Activated CD4-positive, alpha-beta T cell treated with anti-CD3 and anti-CD28 coated beads for 36 hours (primary cell): ENCODE measurements at regions of chr9 and their contacts with region 1.

Region 1: DNA sequence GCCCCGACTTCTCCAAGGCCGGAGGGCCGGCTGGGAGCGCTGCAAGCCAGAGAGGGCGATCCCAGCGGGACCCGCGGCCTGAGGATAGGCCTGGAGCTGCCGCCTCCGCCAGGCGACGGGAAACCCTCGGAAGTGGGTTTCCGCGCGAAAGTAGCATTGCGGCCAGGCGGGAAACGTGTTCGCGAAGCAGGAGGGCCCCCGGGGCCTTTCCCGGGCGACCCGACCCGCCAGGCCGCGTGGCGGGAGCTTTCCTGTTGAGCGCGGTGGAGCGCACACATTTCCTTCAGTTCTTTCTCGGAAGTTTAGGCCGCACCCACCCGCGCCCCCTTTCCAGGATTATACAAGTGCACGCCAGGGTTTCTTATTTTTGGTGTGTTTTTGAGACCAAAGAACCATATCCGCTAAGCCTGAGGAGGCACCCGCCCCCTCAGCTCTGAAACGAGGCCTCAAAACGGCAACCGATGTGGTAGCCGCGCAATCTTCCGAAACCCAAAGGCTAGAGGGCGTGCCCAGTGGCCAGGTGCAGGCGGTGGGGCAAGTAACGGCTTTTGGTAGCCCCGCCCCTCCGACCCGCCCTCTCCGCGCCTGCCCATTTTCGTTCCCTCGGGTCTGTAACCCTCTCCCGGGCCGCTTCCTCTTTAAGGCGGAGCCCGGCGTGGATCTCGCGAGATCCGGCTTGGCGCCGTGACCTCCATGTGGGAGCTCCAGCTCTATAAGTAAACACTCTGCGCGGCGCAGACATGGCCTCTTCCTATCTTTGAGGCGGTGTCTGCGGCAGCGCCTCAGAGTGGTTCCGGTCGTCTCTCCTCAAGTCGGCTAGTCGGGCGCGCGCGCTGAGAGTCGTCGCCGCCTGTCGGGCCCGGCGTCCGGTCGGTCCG is at the start of gene UHRF2:
- DNase-seq: peak; percentile 100
- ATAC-seq: peak; percentile 91
- H3K4me3 Mint-ChIP-seq: peak within 1 kb of the TSS; percentile 83
- H3K27ac Mint-ChIP-seq: peak within 1 kb of the TSS; percentile 93
- H3K4me1 Mint-ChIP-seq: peaks cover 32% of the 10 kb centered on the region
- H3K27me3 Mint-ChIP-seq: peaks cover 6% of the 10 kb centered on the region
- total RNA-seq, gene UHRF2: 63.7 to 70.9 TPM

Region 2: DNA sequence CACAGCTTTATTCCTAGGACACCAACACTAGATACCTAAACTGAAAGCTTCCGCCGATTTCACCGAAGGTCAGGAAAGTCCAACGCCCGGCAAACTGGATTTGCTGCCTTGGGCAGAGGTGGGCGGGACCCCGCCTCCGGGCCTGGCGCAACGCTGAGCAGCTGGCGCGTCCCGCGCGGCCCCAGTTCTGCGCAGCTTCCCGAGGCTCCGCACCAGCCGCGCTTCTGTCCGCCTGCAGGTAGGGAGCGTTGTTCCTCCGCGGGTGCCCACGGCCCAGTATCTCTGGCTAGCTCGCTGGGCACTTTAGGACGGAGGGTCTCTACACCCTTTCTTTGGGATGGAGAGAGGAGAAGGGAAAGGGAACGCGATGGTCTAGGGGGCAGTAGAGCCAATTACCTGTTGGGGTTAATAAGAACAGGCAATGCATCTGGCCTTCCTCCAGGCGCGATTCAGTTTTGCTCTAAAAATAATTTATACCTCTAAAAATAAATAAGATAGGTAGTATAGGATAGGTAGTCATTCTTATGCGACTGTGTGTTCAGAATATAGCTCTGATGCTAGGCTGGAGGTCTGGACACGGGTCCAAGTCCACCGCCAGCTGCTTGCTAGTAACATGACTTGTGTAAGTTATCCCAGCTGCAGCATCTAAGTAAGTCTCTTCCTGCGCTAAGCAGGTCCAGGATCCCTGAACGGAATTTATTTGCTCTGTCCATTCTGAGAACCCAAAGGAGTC is 962.2 kb before region 1 on chr9 and contains the start of gene CD274:
- CTCF ChIA-PET with region 1: no interaction called
- POLR2A ChIA-PET with region 1: no interaction called
- intact Hi-C with region 1: loop called in 1 of 2 experiments (anchors 5 kb)
- DNase-seq: peak; percentile 94
- ATAC-seq: peak; percentile 66
- H3K4me3 Mint-ChIP-seq: peak within 1 kb of the TSS; percentile 98
- H3K27ac Mint-ChIP-seq: peak within 1 kb of the TSS; percentile 90
- H3K4me1 Mint-ChIP-seq: peaks cover 77% of the 10 kb centered on the region
- H3K27me3 Mint-ChIP-seq: no peaks in the 10 kb centered on the region
- total RNA-seq, gene CD274: 25.0 to 30.1 TPM

Region 3: GRCh38 chr9:6015278-6016157 is 397.2 kb before region 1 on chr9 and contains the start of gene RANBP6:
- CTCF ChIA-PET with region 1: no interaction called
- POLR2A ChIA-PET with region 1: no interaction called
- intact Hi-C with region 1: loop called in 1 of 2 experiments (anchors 2 kb)
- DNase-seq: peak; percentile 97
- ATAC-seq: peak; percentile 94
- H3K4me3 Mint-ChIP-seq: peak within 1 kb of the TSS; percentile 95
- H3K27ac Mint-ChIP-seq: peak within 1 kb of the TSS; percentile 99
- H3K4me1 Mint-ChIP-seq: peaks cover 28% of the 10 kb centered on the region
- H3K27me3 Mint-ChIP-seq: no peaks in the 10 kb centered on the region
- total RNA-seq, gene RANBP6: 11.7 to 18.2 TPM

Region 4: GRCh38 chr9:6126374-6126773 is 286.4 kb before region 1 on chr9:
- CTCF ChIA-PET with region 1: no interaction called
- POLR2A ChIA-PET with region 1: no interaction called
- intact Hi-C with region 1: no loop called
- DNase-seq: no peak
- ATAC-seq: no peak
- H3K4me3 Mint-ChIP-seq: no peak overlapping the region
- H3K27ac Mint-ChIP-seq: no peak overlapping the region
- H3K4me1 Mint-ChIP-seq: no peaks in the 10 kb centered on the region
- H3K27me3 Mint-ChIP-seq: peaks cover 14% of the 10 kb centered on the region

Region 5: DNA sequence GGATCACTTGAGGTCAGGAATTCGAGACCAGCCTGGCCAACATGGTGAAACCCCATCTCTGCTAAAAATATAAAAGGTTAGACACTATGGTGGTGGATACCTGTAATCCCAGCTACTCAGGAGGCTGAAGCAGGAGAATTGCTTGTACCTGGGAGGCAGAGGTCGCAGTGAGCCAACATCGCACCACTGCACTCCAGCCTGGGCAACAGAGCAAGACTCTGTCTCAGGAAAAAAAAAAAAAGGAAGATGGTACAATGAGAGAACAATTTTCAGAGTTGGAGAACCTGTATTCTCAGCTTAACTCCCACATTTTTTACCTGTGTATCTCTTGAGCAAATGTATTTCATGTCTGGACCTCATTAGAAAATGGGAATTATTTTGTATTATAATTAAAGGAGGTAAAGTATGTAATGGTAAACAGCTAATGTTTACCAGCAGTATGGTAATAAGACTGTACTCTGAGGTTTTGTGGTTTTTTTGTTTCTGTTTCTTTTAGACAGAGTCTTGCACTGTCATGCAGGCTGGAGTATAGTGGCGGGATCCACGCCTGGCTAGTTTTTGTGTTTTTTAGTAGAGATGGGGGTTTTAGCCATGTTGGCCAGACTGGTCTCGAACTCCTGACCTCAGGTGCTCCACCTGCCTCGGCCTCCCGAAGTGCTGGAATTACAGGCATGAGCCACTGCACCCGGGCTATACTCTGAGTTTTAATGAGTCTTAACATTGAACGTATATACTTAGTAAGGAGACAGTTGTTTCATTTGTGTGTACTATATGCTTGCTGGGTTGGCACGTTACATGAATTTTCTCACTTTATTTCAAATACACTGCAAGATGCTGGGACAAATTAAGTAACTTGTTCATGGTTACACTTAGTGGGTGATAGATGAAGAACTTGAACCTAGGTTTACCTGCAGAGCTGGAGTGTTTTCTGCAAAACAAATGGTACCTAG is 16.5 kb after region 1 on chr9:
- CTCF ChIA-PET with region 1: interaction called, 5 read pairs
- POLR2A ChIA-PET with region 1: interaction called, 6 read pairs
- intact Hi-C with region 1: loop called (anchors 2 kb)
- DNase-seq: peak; percentile 22
- ATAC-seq: peak; percentile 68
- H3K4me3 Mint-ChIP-seq: no peak overlapping the region
- H3K27ac Mint-ChIP-seq: peak overlapping the region; percentile 4
- H3K4me1 Mint-ChIP-seq: peaks cover 78% of the 10 kb centered on the region
- H3K27me3 Mint-ChIP-seq: no peaks in the 10 kb centered on the region

Region 6: GRCh38 chr9:6681147-6681956 is 268.6 kb after region 1 on chr9:
- CTCF ChIA-PET with region 1: no interaction called
- POLR2A ChIA-PET with region 1: interaction called, 7 read pairs
- intact Hi-C with region 1: loop called (anchors 1 kb)
- DNase-seq: peak; percentile 96
- ATAC-seq: peak; percentile 88
- H3K4me3 Mint-ChIP-seq: peak overlapping the region; percentile 88
- H3K27ac Mint-ChIP-seq: peak overlapping the region; percentile 99
- H3K4me1 Mint-ChIP-seq: peaks cover 19% of the 10 kb centered on the region
- H3K27me3 Mint-ChIP-seq: no peaks in the 10 kb centered on the region

Region 7: DNA sequence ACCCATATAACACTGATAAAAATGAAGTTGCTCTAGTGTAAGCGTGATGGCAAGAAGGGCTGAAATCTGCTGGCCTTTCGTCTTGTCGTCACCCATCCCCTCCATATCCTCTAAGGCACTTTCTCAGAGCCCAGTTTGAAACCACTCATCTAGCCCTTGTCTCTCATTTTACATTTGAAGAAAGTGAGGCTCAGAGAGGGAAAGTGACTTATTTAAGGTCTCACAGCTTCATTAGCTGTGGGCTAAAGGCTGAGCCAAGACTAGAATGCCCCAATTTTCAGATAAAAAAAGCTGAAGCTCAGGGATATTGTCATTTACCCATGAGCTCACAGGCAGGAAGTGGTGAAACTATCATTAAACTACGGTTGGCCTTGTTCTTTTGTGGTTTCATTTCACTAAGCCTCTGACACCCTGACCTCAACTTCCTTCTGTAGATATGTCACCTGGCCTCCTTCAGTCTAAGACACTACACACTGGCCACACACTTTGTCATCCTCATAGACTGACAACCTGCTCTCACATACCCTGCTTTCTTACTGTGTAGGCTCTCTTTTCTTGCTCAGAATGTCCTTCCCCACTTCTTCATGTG is 1563.5 kb after region 1 on chr9:
- CTCF ChIA-PET with region 1: no interaction called
- POLR2A ChIA-PET with region 1: no interaction called
- intact Hi-C with region 1: loop called in 1 of 2 experiments (anchors 10 kb)
- DNase-seq: peak; percentile 60
- ATAC-seq: peak; percentile 95
- H3K4me3 Mint-ChIP-seq: peak overlapping the region; percentile 32
- H3K27ac Mint-ChIP-seq: peak overlapping the region; percentile 82
- H3K4me1 Mint-ChIP-seq: peaks cover 62% of the 10 kb centered on the region
- H3K27me3 Mint-ChIP-seq: no peaks in the 10 kb centered on the region